ENCODE measurements at regions of chr3 and their contacts with region 1.

Region 1: DNA sequence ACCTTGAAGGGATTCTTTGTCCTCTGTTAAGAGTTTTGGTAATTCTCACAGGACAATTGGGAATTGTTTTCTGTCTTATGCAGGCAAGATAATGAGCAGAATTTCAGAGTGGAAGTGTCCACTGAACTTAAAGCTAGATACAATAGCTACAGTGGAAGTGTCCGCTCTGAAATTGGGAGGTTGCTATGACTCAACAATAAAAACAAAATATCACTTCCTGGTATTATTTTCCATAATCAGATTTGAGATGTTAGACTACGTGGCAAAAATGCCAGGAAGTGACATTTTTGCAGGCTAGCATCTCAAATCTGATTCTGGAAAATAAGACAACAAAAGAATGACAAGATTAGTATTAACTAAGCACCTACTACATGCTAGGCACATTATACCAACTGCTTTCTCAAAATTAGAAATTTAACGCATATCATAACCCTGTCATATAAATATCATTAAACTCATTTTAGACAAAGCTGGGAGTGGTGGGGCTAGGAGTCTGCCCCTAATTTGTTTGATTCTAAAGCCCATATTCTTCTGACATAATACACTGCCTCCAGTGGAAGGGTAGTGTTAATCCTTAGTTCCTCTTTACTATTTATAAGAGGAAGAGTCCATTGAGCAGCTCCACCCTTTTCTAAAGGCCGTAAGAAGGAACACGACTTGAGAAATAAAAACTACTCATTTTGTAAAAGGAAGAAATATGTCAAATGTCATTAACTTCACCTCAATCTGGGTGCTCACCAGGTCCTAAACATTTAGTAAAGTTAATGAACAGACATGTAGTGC is 266.9 kb upstream of the STT3B start:
- DNase-seq: peak; percentile 87
- H3K4me3 ChIP-seq: no peak overlapping the region
- H3K27ac ChIP-seq: peak overlapping the region; percentile 93
- H3K4me1 ChIP-seq: peaks cover 17% of the 10 kb centered on the region
- H3K27me3 ChIP-seq: no peaks in the 10 kb centered on the region
- CTCF ChIP-seq: no peak
- POLR2A ChIP-seq: no peak

Region 2: DNA sequence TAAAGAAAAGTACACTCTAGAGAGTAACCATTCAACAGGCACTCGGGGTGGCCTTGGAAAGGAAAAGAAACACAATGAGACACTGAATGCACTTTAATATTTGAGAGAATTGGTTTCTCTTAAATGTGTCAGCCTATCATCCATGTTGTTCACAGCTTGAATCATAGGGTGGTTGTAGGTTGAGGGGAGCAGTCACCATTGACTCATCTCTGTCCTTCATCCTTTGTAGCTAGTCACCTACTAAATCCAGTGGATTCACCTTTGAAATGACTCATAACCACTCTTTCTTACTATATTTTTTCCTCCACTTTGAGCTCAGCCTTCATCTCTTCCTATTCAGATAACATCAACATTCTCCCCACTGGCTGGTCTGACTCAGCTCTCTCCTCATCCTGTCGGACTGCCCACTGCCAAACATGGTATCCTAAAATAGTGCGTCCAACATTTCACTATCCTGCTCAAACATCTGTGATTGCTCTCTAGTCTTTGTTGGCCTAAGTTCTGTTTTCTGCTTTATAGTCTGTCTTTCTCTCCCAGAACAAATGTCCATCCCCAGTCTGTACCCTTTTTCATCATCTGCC is 188.7 kb before region 1 on chr3:
- CTCF ChIA-PET with region 1: no interaction called
- POLR2A ChIA-PET with region 1: no interaction called
- dilution Hi-C with region 1: no loop called
- intact Hi-C with region 1: no loop called
- DNase-seq: peak; percentile 89
- H3K4me3 ChIP-seq: no peak overlapping the region
- H3K27ac ChIP-seq: peak overlapping the region; percentile 66
- H3K4me1 ChIP-seq: peaks cover 21% of the 10 kb centered on the region
- H3K27me3 ChIP-seq: no peaks in the 10 kb centered on the region
- CTCF ChIP-seq: no peak
- POLR2A ChIP-seq: no peak

Region 3: DNA sequence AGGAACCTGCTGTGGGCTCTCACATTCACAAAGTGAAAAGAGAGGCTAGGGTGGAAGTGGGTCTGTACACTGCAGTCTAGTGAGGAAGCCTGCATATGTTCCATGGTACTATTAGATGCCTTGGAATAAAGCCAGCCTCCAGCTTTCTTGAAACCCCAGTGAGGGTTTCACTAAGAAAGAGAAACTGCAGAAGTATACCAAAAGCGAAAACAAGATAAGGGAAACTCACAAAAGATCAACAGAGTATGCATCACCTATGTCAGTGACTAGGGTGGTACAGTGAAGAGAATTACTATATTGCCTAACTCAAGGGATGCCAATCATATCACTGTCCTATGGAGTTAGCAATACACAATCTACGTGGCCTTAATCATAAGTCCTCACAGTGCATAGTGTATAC is 158.9 kb before region 1 on chr3:
- CTCF ChIA-PET with region 1: no interaction called
- POLR2A ChIA-PET with region 1: no interaction called
- dilution Hi-C with region 1: no loop called
- intact Hi-C with region 1: no loop called
- DNase-seq: no peak
- H3K4me3 ChIP-seq: no peak overlapping the region
- H3K27ac ChIP-seq: no peak overlapping the region
- H3K4me1 ChIP-seq: peaks cover 19% of the 10 kb centered on the region
- H3K27me3 ChIP-seq: no peaks in the 10 kb centered on the region
- CTCF ChIP-seq: no peak
- POLR2A ChIP-seq: no peak

Region 4: GRCh38 chr3:31213869-31214486 is 51.9 kb before region 1 on chr3:
- CTCF ChIA-PET with region 1: no interaction called
- POLR2A ChIA-PET with region 1: no interaction called
- dilution Hi-C with region 1: no loop called
- intact Hi-C with region 1: loop called (anchors 2 kb)
- DNase-seq: peak; percentile 46
- H3K4me3 ChIP-seq: no peak overlapping the region
- H3K27ac ChIP-seq: no peak overlapping the region
- H3K4me1 ChIP-seq: peaks cover 12% of the 10 kb centered on the region
- H3K27me3 ChIP-seq: no peaks in the 10 kb centered on the region
- CTCF ChIP-seq: no peak
- POLR2A ChIP-seq: no peak

Region 5: DNA sequence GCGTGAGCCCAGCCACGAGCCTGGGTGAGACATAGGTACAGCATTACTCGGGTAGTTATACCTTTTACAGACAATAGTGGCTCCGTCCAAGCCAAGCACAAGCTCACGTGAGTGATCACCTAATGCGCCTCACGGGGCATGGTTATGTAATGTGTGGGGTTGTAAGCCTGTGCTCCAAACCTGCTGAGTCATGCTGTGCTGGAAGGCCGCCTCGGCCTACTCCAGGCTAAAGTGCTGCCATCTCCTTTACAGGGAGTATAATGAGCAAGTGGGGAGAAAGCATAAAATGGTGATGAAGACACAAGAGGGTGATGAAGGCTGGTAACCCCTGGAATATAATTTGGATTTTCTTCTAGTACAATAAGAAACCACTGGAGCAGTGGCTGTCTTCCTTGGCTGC is 91.1 kb after region 1 on chr3:
- CTCF ChIA-PET with region 1: no interaction called
- POLR2A ChIA-PET with region 1: no interaction called
- dilution Hi-C with region 1: no loop called
- intact Hi-C with region 1: no loop called
- DNase-seq: no peak
- H3K4me3 ChIP-seq: no peak overlapping the region
- H3K27ac ChIP-seq: no peak overlapping the region
- H3K4me1 ChIP-seq: no peaks in the 10 kb centered on the region
- H3K27me3 ChIP-seq: no peaks in the 10 kb centered on the region
- CTCF ChIP-seq: no peak
- POLR2A ChIP-seq: no peak

Measured in endothelial cell of umbilical vein (primary cell).